Thyroid gland (tissue), 4 donors: ENCODE measurements at regions of chr15 and their contacts with region 1.

Region 1: DNA sequence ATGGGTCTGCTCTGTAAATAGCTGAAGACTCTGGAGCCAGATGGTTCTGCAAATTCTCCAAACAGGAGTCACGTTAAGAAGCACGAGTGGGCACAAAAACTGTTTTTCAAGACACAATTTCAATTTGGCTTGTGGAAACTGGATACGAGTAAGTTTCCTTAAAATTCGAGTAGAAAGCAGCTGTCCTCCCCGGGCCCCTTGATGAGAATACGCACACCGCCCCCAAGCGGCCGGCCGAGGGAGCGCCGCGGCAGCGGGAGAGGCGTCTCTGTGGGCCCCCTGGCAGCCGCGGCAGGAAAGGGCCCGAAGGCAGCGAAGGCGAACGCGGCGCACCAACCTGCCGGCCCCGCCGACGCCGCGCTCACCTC is 778 bp upstream of the THBS1 start:
- DNase-seq: peak; percentile 90 to 95
- H3K4me3 ChIP-seq: peak overlapping the region; percentile 4 to 42 (median 22)
- H3K27ac ChIP-seq: peak overlapping the region in 2 of 3 donors; percentile 64 to 80
- H3K4me1 ChIP-seq: peaks cover 8% of the 10 kb centered on the region in 2 donors
- H3K27me3 ChIP-seq: no peaks in the 10 kb centered on the region
- CTCF ChIP-seq: peak; percentile 72 to 98 (median 96)
- POLR2A ChIP-seq: no peak

Region 2: DNA sequence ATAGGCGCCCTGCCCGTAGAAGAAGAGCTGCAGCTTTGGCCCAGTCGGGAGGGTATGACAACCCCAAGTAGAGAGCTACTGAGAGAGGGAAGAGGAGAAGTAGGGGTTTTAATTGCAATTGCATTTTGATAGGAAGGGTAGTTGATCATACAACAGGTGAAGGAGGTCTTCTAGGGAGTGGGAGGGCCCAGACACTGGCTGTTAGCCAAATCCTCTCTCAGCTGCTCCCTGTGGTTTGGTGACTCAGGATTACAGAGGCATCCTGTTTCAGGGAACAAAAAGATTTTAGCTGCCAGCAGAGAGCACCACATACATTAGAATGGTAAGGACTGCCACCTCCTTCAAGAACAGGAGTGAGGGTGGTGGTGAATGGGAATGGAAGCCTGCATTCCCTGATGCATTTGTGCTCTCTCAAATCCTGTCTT is 408.1 kb before region 1 on chr15:
- intact Hi-C with region 1: loop called (anchors 5 kb)
- DNase-seq: peak; percentile 52 to 64
- H3K4me3 ChIP-seq: no peak overlapping the region
- H3K27ac ChIP-seq: no peak overlapping the region
- H3K4me1 ChIP-seq: peaks cover 0 to 14% of the 10 kb centered on the region in 2 donors
- H3K27me3 ChIP-seq: no peaks in the 10 kb centered on the region
- CTCF ChIP-seq: peak in 4 of 6 experiments; percentile 40 to 73 (median 58)
- POLR2A ChIP-seq: no peak

Region 3: GRCh38 chr15:39479911-39480310 is 100.2 kb before region 1 on chr15:
- intact Hi-C with region 1: no loop called
- DNase-seq: no peak
- H3K4me3 ChIP-seq: no peak overlapping the region
- H3K27ac ChIP-seq: no peak overlapping the region
- H3K4me1 ChIP-seq: no peaks in the 10 kb centered on the region
- H3K27me3 ChIP-seq: no peaks in the 10 kb centered on the region
- CTCF ChIP-seq: no peak
- POLR2A ChIP-seq: no peak

Region 4: DNA sequence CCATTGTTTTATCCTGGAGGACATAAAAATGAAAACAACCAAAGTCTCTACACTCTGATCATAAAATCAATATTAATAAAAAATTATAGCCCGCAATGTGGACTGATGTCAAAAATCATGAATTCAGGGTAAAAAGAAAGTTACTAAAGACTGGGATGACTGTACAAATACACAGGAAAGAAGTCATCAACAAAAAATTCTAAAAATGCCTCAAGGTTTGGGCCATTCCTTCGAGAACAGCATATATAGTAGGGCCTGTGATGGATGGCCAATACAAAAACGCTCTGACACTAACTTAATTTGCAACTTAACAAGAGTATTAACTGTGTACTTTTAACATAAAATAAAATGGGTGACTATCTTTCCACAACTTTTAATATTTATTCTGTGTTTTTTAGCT is 77.6 kb after region 1 on chr15:
- intact Hi-C with region 1: no loop called
- DNase-seq: no peak
- H3K4me3 ChIP-seq: no peak overlapping the region
- H3K27ac ChIP-seq: no peak overlapping the region
- H3K4me1 ChIP-seq: no peaks in the 10 kb centered on the region
- H3K27me3 ChIP-seq: no peaks in the 10 kb centered on the region
- CTCF ChIP-seq: no peak
- POLR2A ChIP-seq: no peak

Region 5: GRCh38 chr15:39756806-39757522 is 176.9 kb after region 1 on chr15:
- intact Hi-C with region 1: loop called (anchors 10 kb)
- DNase-seq: peak in 1 of 2 donors; percentile 16
- H3K4me3 ChIP-seq: no peak overlapping the region
- H3K27ac ChIP-seq: no peak overlapping the region
- H3K4me1 ChIP-seq: no peaks in the 10 kb centered on the region
- H3K27me3 ChIP-seq: no peaks in the 10 kb centered on the region
- CTCF ChIP-seq: peak; percentile 28 to 81 (median 60)
- POLR2A ChIP-seq: no peak

Region 6: DNA sequence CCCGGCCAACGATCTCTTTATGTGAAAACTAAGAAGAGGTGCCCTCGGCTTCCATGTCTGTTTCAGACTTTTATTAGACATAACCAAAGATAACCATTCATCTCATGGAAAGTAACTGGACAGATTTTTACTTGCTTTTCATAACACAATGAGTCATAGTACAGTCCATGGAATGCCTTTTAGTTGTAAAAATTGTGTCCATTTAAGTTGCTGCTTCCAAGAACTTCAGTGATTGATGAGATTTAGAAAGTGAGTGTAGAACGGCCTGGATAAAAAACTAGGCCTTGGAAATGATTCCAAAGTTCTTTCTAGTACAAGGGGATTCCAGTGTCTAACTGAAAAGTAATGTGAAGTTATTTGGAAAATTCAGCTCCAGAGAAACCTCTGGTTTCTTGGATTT is 364.6 kb after region 1 on chr15:
- intact Hi-C with region 1: no loop called
- DNase-seq: no peak
- H3K4me3 ChIP-seq: no peak overlapping the region
- H3K27ac ChIP-seq: no peak overlapping the region
- H3K4me1 ChIP-seq: peaks cover 6 to 9% of the 10 kb centered on the region in 2 donors
- H3K27me3 ChIP-seq: no peaks in the 10 kb centered on the region
- CTCF ChIP-seq: no peak
- POLR2A ChIP-seq: no peak